A549 (cell line): ENCODE measurements at regions of chr11 and their contacts with region 1.

Region 1: DNA sequence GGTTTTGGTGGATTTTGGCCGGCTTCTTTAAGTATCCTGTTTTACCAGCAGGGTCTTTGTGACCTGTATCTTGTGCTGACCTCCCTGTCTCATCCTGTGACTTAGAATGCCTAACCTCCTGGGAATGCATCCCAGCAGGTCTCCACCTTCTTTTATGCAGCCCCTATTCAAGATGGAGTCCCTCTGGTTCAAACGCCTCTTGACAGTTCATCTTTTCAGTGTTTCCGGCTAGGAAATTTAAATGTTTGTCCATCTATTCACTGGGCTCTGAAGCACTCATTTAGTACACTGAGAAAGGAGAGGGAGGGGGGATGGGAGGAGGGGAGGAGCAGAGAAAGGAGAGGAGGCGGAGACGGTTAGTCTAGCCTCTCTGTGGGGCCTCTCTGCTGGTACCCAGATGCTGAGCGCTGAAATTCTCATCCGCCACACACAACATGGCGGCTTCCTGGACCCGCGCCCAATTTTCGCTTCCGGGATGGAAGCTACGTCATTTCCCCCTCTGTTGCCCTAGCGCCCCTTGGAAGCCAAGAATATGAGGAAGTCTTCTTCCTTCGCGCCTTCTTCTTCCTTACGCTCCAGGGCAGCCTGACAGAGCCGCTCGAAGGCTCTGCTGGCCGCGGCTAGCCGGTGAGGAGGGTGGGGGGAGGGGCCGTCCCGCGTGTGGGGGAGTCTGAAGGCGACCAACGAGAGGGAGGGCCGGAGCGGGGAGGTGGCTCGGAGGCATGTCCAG is 69.0 kb upstream of the SYT13 start:
- DNase-seq: peak; percentile 48 to 75
- ATAC-seq: peak; percentile 79 to 90
- H3K4me3 ChIP-seq: peak overlapping the region; percentile 50
- H3K27ac ChIP-seq: peak overlapping the region; percentile 38 to 78; a peak in 4 of 6 replicates
- H3K4me1 ChIP-seq: no peaks in the 10 kb centered on the region
- CTCF ChIP-seq: no peak
- EP300 ChIP-seq: no peak
- POLR2A ChIP-seq: no peak
- RAD21 ChIP-seq: no peak

Region 2: DNA sequence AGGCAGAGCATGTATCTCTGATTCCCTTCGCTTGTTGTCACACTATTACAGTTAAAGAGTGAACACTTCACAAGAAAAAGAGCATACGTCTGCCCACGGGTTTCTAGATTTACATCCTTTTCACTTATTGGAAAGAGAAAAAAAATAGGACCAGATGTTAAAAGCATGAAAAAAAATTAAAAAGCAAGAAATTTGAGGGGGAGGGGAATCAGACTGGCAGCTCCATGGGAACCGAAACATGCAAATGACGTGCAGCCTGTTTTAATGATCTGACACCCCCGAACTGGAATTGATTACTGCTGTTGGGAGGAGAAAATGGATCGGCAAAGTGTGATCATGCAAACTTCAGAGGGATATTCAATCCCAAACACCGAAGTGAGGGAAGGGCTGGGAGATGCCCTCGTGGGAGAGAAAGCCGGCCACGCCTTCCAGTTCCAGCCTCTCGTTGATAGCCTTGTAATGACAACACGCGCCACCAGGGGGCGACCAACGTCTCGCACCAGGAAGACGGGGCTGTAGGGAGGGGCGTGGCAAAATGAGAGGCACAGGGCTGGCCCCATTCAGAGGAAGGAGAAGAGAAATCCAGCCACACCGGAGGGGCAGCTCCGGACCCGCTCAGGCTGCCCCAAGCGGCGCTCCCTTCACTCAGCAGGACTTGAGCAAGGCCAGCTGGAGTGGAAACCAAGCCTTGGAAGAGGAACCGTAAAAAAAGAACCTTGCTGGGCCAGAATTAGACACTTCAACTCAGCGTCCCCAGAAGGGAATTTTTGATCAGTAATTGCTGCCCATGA is 15.2 kb before region 1 on chr11:
- CTCF ChIA-PET with region 1: interaction called, 18 read pairs
- POLR2A ChIA-PET with region 1: no interaction called
- DNase-seq: peak; percentile 91 to 95
- ATAC-seq: peak; percentile 90 to 99
- H3K4me3 ChIP-seq: peak overlapping the region; percentile 32
- H3K27ac ChIP-seq: no peak overlapping the region
- H3K4me1 ChIP-seq: no peaks in the 10 kb centered on the region
- CTCF ChIP-seq: peak; percentile 81
- EP300 ChIP-seq: no peak
- POLR2A ChIP-seq: no peak
- RAD21 ChIP-seq: peak; percentile 64 to 66